MCF 10A (cell line): ENCODE measurements at regions of chr15 and their contacts with region 1.

Region 1: GRCh38 chr15:73873889-73874511 is 636 bp downstream of the TBC1D21 start:
- DNase-seq: peak; percentile 73
- H3K4me3 Mint-ChIP-seq: no peak overlapping the region
- H3K27ac Mint-ChIP-seq: no peak overlapping the region
- H3K4me1 Mint-ChIP-seq: no peaks in the 10 kb centered on the region
- H3K27me3 Mint-ChIP-seq: peaks cover 70% of the 10 kb centered on the region
- CTCF ChIP-seq: peak; percentile 70

Region 2: GRCh38 chr15:73897441-73898261 is 23.7 kb after region 1 on chr15:
- CTCF ChIA-PET with region 1: interaction called, 13 read pairs
- POLR2A ChIA-PET with region 1: no interaction called
- intact Hi-C with region 1: no loop called
- DNase-seq: peak; percentile 80
- H3K4me3 Mint-ChIP-seq: no peak overlapping the region
- H3K27ac Mint-ChIP-seq: no peak overlapping the region
- H3K4me1 Mint-ChIP-seq: no peaks in the 10 kb centered on the region
- H3K27me3 Mint-ChIP-seq: no peaks in the 10 kb centered on the region
- CTCF ChIP-seq: peak; percentile 88

Region 3: DNA sequence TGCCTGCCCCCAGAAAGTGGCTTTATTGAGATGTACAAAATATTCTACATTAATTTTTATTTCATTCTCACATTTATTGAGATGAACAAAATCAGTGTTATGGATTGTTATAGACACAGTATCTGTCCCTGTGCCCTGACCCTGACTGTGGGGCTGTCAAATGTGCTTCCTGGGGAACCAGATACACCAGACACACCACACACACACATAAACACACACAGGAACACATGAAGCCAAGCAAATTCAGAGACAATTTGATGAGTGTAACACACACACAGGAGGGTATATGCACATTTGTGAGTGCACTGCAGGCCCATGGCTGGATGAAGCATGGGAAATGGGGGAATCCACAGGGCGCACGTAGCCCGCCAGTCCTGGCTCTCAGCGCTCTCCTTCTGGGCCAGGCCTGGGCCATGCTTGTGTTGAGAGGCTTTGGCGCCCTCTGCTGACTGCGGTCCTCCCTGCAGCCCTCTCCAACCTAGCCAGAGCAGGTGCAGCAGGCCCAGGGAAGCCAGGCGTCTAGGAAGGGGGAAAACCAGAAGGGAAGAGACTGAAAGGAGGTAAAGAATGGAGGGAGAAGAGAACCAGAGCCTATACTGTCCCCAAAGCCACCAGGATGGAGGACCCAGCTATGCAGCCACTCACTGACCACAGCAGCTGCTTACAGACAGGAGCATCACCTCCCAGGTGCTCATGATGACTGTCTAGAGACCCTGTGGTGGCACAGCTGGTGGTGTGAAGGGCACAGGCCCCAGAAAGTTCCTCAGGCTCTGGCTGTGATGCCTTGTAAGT is 34.2 kb after region 1 on chr15:
- CTCF ChIA-PET with region 1: interaction called, 36 read pairs
- POLR2A ChIA-PET with region 1: no interaction called
- intact Hi-C with region 1: loop called (anchors 1 kb)
- DNase-seq: peak; percentile 64
- H3K4me3 Mint-ChIP-seq: no peak overlapping the region
- H3K27ac Mint-ChIP-seq: no peak overlapping the region
- H3K4me1 Mint-ChIP-seq: no peaks in the 10 kb centered on the region
- H3K27me3 Mint-ChIP-seq: peaks cover 40% of the 10 kb centered on the region
- CTCF ChIP-seq: peak; percentile 93

Region 4: GRCh38 chr15:73964736-73965093 is 90.7 kb after region 1 on chr15:
- CTCF ChIA-PET with region 1: interaction called, 32 read pairs
- POLR2A ChIA-PET with region 1: no interaction called
- intact Hi-C with region 1: loop called (anchors 1 kb)
- DNase-seq: peak; percentile 85
- H3K4me3 Mint-ChIP-seq: no peak overlapping the region
- H3K27ac Mint-ChIP-seq: no peak overlapping the region
- H3K4me1 Mint-ChIP-seq: no peaks in the 10 kb centered on the region
- H3K27me3 Mint-ChIP-seq: no peaks in the 10 kb centered on the region
- CTCF ChIP-seq: peak; percentile 86